ENCODE measurements at regions of chr19 and their contacts with region 1.

Region 1: GRCh38 chr19:17069218-17069617 is 6.0 kb downstream of the HAUS8 start:
- DNase-seq: no peak
- H3K4me3 ChIP-seq: no peak overlapping the region
- CTCF ChIP-seq: no peak

Region 2: DNA sequence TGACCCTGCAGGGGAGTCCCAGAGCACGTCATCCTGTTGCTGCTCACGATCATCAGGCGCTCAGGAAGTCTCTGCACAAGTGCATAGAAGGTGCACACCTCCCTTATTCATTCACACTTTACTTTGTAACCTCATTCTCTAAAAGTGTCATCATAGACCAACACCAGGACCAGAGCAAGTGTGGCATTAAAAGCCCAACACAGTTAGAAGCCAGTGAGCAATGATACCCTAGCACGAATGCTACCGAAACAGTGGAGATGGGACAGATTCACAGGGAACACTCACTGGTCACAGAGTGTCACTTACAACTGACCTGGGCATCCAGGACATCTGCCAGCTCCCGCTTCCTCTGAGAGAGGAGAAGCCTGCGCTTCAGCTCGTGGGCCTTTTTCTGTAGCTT is 11.0 kb before region 1 on chr19:
- CTCF ChIA-PET with region 1: interaction called, 10 read pairs
- POLR2A ChIA-PET with region 1: no interaction called
- DNase-seq: no peak
- H3K4me3 ChIP-seq: no peak overlapping the region
- CTCF ChIP-seq: no peak

Measured in AG04449 (cell line).